ENCODE measurements at regions of chr2 and their contacts with region 1.

Region 1: DNA sequence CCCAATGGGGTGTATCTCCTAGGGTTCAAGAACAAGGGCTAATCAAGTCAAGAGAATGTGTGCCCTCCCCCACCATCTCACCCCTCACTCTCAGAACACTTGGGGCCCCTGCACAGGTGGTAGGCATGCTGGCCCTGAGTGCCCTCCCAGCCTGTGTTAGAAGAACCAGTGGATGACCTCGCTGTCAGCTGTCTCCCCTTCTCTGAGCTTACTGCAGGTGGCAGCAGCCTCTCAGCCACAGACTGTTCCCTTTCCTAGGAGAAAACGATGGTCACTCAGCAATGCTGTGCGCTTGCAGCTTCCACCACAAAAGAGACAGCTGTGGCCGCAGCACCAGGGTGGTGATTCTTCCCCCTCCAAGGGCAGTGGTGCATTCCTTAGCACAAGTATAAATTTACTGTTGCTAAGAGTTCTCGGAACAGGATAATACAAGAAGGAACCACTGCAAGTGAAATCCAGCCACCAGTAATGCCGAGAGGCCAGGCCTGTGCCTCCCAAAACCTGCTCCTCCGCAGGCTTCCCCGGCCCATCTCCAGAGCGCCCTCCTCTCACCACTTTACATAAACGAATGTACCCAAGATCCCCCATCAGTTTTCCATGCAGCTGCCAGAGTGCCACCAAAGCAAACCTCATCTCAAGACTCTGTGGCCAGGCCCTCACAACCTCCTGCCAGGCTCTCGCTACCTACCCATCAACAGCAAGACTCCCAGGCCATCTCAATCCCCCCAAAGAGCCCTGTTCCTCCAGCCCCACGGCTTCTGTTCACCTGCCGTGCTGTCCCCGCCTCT is 935 bp upstream of the RAMP1 start:
- DNase-seq: peak; percentile 30
- H3K4me3 ChIP-seq: no peak overlapping the region
- H3K27me3 ChIP-seq: peaks cover 5% of the 10 kb centered on the region
- CTCF ChIP-seq: peak; percentile 89

Region 2: DNA sequence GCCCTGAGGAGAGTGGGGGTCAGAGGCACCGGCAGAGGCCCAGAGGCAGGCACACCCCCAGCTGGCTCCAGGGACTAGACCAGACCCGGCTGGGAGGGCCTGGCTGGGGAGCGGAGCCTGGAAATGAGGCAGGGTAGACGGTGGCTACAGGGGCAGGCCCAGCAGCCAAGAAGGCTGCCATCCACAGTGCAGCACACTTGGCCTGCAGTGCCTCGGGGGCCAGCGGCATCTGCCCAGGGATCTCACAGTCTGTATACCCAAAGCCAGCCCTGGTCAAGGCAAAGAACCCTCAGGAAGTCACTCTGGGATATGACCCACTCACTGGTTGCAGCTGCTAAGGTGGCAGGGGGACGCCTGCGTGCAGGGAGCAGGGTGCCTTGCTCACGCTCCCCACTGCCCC is 412.1 kb after region 1 on chr2:
- CTCF ChIA-PET with region 1: interaction called, 84 read pairs
- POLR2A ChIA-PET with region 1: no interaction called
- DNase-seq: no peak
- H3K4me3 ChIP-seq: no peak overlapping the region
- H3K27me3 ChIP-seq: no peaks in the 10 kb centered on the region
- CTCF ChIP-seq: no peak

Measured in BJ (cell line).